Motor neuron (in vitro differentiated cells): ENCODE measurements at regions of chr6 and their contacts with region 1.

Region 1: DNA sequence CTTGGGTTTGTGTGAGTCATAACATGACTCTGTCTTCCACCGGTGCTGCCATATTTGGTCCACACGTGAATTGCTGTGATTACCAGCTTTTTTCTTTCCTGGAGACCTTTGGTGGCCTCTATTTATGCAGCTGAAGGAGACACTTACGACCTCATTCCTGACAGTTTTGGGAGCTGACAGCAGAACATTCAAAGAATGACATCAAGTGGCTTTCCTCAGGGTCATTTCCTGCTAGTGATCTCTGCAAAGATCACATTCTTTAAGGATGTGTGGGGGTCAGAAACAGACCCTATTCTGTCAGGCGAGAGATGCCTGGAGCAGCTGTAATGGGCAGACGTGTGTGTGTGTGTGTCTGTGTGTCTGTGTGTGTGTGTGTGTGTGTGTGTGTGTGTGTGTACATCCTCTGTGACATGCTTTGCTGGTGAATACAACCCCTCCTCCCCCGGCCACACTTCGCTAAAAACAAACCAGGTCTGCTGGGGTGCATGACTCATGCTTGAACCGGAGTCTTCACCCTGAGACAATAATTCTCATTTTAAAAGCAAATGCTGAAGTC is 115.6 kb downstream of the TMEM170B start:
- ATAC-seq: peak in 7 of 8 experiments; percentile 47 to 89 (median 82)
- H3K4me3 ChIP-seq: no peak overlapping the region
- H3K27ac ChIP-seq: peak overlapping the region in 1 of 2 donors; percentile 54
- H3K4me1 ChIP-seq: peaks cover 23 to 27% of the 10 kb centered on the region in 2 donors

Region 2: DNA sequence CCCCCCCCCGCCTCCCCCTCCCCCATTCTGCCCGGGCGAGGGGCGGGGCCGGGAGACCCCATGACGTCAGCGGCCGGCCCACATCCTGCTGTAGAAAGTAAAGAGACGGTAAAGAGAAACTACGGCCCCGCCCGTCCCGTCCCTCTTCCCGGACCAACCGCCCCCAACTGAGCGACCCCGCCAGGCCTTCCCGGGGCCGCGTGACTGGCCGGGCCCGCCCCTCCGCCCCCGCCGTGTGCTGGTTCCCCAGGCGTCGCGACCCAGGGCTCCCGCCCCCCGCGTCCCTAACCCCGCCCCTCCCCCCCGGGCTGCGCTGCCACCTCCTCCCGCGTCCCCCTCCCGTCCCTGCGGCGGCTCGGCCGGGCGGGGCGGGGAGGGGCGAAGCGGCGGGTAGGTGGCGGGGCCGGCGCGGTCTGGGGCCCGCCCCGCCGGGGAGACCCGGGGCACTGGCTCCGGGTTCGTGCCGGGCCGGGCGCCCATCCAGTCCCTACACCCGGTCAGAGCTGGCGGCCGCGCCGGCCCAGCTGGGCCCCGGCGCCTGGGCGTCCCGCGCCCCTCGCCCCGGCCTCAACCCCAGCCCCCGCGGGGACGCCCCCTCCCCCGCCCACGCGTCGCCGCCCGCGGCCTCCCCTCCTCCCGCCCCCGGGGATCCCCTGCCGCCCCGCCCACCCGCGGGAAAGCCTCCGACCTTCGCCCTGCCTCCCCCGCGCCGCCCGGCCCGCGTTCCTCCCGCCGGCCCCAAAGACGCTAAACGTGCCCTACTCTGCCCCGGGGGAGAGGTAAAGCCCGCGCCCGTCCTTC is 358.4 kb after region 1 on chr6:
- in situ Hi-C with region 1: loop called in 1 of 9 experiments (anchors 25 kb)
- ATAC-seq: peak; percentile 58 to 76 (median 70)
- H3K4me3 ChIP-seq: peak overlapping the region; percentile 62 to 94 (median 83)
- H3K27ac ChIP-seq: peak overlapping the region; percentile 90 to 95
- H3K4me1 ChIP-seq: peaks cover 7 to 19% of the 10 kb centered on the region in 2 donors

Region 3: DNA sequence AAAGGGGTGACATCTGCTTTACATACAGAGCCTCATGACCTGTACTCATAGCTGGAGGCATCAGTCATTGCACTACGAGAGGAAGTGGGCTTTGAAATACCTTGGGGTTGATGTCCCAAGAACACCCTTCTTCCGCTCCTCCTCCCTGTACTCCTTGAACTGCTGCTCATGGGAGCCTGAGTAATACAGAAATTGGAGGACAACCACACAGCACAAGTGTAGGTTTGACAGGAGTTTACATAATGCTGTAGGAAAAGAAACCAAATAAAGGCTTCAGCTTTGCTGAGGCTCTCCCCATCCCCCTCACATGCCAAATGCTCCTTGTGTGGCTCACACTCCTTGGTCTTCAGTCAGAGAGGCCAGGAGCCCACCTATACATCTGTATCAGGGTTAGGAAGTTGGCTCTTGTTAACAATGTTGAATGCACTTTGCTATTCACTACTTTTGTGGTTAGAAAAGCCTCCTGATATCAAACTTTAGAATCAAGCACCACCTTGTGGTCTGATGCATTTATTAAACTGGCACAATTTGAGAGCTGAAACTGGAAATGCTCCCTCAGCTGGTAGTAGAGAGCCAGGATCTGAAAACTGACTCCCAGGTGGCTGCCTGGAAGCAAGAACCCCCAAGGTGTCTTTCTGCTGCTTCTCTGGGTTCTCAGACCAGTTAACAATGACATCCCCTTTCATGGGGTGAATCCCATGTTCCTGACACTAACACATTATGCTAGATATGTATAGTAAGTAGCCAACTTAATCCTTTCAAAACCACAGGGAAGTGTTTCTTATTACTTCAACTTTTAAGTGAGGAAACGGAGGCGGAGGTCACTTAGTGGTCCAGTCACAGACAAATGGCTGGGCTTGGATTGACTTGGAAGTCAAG is 580.8 kb after region 1 on chr6:
- in situ Hi-C with region 1: loop called in 6 of 9 experiments (anchors 10 to 25 kb)
- ATAC-seq: peak; percentile 59 to 92 (median 78)
- H3K4me3 ChIP-seq: no peak overlapping the region
- H3K27ac ChIP-seq: no peak overlapping the region
- H3K4me1 ChIP-seq: no peaks in the 10 kb centered on the region

Region 4: DNA sequence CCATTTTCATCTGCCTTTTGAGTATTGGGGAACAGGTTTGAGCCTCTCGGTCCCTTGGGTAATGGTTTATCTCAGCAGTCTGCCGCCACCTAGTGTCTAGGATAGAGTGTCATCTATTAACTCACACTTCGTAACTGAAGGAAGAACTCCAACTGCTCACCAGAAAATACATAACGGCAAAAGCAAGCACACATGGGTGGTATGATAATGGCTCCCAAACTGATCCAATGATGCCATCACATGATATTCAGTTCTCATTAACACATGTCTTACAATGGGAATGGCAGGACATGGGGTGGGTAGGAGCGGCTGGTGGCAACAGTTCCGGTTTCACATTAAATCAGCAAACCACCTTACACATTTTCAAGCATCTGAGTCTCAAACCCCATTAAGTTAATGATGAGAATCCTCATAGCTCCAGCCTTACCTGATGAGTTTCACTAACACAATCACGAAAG is 952.8 kb after region 1 on chr6:
- in situ Hi-C with region 1: loop called in 3 of 9 experiments (anchors 25 kb)
- ATAC-seq: peak; percentile 60 to 91 (median 74)
- H3K4me3 ChIP-seq: no peak overlapping the region
- H3K27ac ChIP-seq: no peak overlapping the region
- H3K4me1 ChIP-seq: peaks cover 0 to 3% of the 10 kb centered on the region in 2 donors